ENCODE measurements at regions of chr11 and their contacts with region 1.

Region 1: DNA sequence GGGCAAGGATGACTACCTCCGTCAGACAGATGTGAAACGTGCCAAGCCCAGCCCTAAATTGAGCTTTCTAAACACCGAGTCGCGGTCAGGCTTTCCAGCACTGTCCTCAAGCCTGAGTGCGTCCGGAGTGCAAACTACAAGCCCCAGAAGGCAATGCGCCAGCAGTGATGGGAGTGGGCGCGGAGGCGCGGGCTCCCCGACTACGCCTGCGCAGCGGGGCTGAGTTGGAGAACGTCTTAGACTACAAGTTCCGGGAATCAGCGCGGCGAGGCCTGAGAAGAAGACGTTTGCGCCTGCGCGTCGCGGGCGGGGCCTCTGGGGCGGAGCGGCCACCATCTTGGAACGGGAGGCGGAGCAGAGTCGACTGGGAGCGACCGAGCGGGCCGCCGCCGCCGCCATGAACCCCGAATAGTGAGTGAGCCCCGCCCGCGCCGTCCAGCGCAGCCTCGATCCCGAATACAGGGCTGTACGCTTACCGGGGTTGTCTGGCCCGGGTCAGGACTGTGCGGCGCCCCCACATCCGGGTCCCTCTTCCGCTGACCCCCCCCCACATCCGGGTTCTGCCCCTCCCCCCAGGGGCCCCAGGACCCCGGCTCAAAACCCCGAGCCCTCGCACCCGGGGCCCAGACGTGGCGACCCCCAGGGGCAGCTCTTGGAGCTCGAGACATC is at the start of gene RAB1B:
- DNase-seq: peak; percentile 100
- H3K4me3 ChIP-seq: peak within 1 kb of the TSS; percentile 85 to 93 (median 91)
- H3K27ac ChIP-seq: peak within 1 kb of the TSS; percentile 74
- H3K4me1 ChIP-seq: peaks cover 12% of the 10 kb centered on the region
- H3K27me3 ChIP-seq: no peaks in the 10 kb centered on the region
- CTCF ChIP-seq: no peak
- POLR2A ChIP-seq: peak; percentile 63
- total RNA-seq, gene RAB1B: 171 and 177 TPM in 2 replicates

Region 2: DNA sequence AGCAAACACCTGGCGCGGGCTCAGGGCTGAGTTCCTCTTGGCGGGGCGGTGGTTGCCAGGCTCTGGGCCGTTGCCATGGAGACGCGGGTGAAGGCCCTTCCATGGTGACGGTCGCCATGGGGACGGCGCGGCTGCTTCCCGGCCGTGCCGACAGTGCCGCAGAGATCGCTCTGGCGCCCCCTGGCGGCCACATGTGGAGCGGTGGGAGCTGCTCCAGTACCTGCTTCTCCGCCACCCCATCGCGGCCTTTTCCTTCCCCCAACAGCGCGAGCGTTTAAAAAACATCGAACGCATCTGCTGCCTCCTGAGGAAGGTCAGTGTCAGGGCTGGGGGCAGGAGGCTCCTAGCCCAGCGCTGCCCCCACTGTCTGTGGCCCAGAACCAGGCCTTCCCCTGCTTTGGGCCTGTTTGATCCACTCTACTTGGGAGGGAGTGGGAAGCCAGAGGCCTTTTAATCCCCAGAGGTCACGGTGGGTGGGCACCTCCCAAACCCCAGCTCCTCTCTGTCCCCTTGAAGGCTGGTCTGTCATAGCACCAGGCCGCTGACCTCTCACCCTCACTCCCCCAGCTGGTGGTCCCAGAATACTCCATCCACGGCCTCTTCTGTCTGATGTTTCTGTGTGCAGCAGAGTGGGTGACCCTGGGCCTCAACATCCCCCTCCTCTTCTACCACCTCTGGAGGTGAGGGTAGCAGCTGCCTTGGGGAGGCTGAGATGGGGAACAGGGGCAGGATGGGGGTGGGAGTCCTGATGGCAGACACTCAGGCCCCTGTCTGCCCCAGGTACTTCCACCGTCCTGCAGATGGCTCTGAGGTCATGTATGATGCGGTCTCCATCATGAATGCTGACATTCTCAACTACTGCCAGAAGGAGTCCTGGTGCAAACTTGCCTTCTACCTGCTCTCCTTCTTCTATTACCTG is 14.3 kb after region 1 on chr11:
- CTCF ChIA-PET with region 1: interaction called, 53 read pairs
- POLR2A ChIA-PET with region 1: no interaction called
- dilution Hi-C with region 1: no loop called
- intact Hi-C with region 1: no loop called
- DNase-seq: peak; percentile 92
- H3K4me3 ChIP-seq: no peak overlapping the region
- H3K27ac ChIP-seq: no peak overlapping the region
- H3K4me1 ChIP-seq: peaks cover under 1% of the 10 kb centered on the region
- H3K27me3 ChIP-seq: peaks cover 0 to 4% of the 10 kb centered on the region in 2 experiments
- CTCF ChIP-seq: peak; percentile 98 to 100
- POLR2A ChIP-seq: peak; percentile 74

Region 3: GRCh38 chr11:66288671-66289547 is 20.5 kb after region 1 on chr11 and contains the start of gene YIF1A:
- CTCF ChIA-PET with region 1: no interaction called
- POLR2A ChIA-PET with region 1: interaction called, 12 read pairs
- dilution Hi-C with region 1: no loop called
- intact Hi-C with region 1: loop called (anchors 1 kb)
- DNase-seq: peak; percentile 100
- H3K4me3 ChIP-seq: peak within 1 kb of the TSS; percentile 73 to 94 (median 93)
- H3K27ac ChIP-seq: peak within 1 kb of the TSS; percentile 78
- H3K4me1 ChIP-seq: peaks cover 13% of the 10 kb centered on the region
- H3K27me3 ChIP-seq: peaks cover 19 to 20% of the 10 kb centered on the region in 2 experiments
- CTCF ChIP-seq: no peak
- POLR2A ChIP-seq: peak; percentile 88
- total RNA-seq, gene YIF1A: 104 and 123 TPM in 2 replicates